Naive thymus-derived CD4-positive, alpha-beta T cell (primary cell): ENCODE measurements at regions of chr10 and their contacts with region 1.

Region 1: GRCh38 chr10:33125522-33126517 is 167.8 kb upstream of the ITGB1 start:
- DNase-seq: peak in 5 of 9 donors; percentile 25 to 63 (median 48)
- ATAC-seq: peak; percentile 87
- H3K4me3 ChIP-seq: no peak overlapping the region
- H3K4me3 Mint-ChIP-seq: peak overlapping the region; percentile 53 to 78 (median 62)
- H3K27ac ChIP-seq: peak overlapping the region; percentile 60
- H3K27ac Mint-ChIP-seq: peak overlapping the region; percentile 90 to 96 (median 92)
- H3K4me1 ChIP-seq: peaks cover 24 to 82% of the 10 kb centered on the region in 2 donors
- H3K4me1 Mint-ChIP-seq: peaks cover 34 to 77% (median 69%) of the 10 kb centered on the region in 7 donors
- H3K27me3 ChIP-seq: no peaks in the 10 kb centered on the region
- H3K27me3 Mint-ChIP-seq: no peaks in the 10 kb centered on the region

Region 2: GRCh38 chr10:33109788-33110469 is 15.9 kb before region 1 on chr10:
- CTCF ChIA-PET with region 1: interaction called, 8 read pairs
- POLR2A ChIA-PET with region 1: interaction called, 10 read pairs
- intact Hi-C with region 1: loop called in 1 of 2 experiments (anchors 2 kb)
- DNase-seq: no peak
- ATAC-seq: peak; percentile 68
- H3K4me3 ChIP-seq: no peak overlapping the region
- H3K4me3 Mint-ChIP-seq: peak overlapping the region in 5 of 10 donors; percentile 9 to 37 (median 26)
- H3K27ac ChIP-seq: no peak overlapping the region
- H3K27ac Mint-ChIP-seq: peak overlapping the region in 7 of 9 donors; percentile 25 to 89 (median 71)
- H3K4me1 ChIP-seq: peaks cover 0 to 72% of the 10 kb centered on the region in 2 donors
- H3K4me1 Mint-ChIP-seq: peaks cover 6 to 49% (median 24%) of the 10 kb centered on the region in 7 donors
- H3K27me3 ChIP-seq: no peaks in the 10 kb centered on the region
- H3K27me3 Mint-ChIP-seq: no peaks in the 10 kb centered on the region

Region 3: DNA sequence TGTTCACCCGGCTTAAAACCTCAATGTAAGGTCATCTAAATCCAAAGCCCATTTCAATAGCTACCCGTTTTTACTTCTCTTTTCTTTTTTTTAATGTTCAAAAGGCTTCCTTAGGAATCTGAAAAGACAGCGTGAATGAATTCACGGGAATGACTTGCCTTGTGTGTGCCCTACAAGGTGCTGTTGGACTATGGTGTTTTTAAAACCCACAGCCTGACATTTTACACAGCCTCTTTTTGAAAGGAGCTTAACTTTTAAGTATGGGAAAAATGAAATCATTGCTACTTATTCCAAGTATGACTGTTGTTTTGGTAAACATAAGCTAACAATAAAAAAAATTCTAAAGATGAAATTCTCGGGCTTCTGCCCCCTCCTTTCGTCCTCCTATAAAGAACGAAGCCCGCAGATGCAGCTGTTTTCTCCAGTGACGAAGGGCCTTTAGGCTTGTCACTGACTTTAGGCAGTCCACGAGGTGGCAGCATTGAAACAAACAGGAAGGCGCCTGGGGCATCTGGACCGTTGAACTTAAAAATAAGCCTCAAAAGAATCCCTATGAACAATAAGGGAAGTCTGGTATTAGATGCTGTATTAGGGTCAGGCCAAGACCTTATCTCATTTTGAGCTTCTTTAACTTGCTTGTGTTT is 67.4 kb after region 1 on chr10:
- CTCF ChIA-PET with region 1: no interaction called
- POLR2A ChIA-PET with region 1: no interaction called
- intact Hi-C with region 1: no loop called
- DNase-seq: peak; percentile 28 to 70 (median 62)
- ATAC-seq: peak; percentile 91
- H3K4me3 ChIP-seq: no peak overlapping the region
- H3K4me3 Mint-ChIP-seq: no peak overlapping the region
- H3K27ac ChIP-seq: no peak overlapping the region
- H3K27ac Mint-ChIP-seq: peak overlapping the region in 1 of 9 donors; percentile 37
- H3K4me1 ChIP-seq: no peaks in the 10 kb centered on the region
- H3K4me1 Mint-ChIP-seq: peaks cover 0 to 6% (median 0%) of the 10 kb centered on the region in 7 donors
- H3K27me3 ChIP-seq: no peaks in the 10 kb centered on the region
- H3K27me3 Mint-ChIP-seq: peaks cover 0 to 28% (median 5%) of the 10 kb centered on the region in 5 donors

Region 4: GRCh38 chr10:33314811-33315561 is 189.2 kb after region 1 on chr10:
- CTCF ChIA-PET with region 1: no interaction called
- POLR2A ChIA-PET with region 1: no interaction called
- intact Hi-C with region 1: no loop called
- DNase-seq: no peak
- ATAC-seq: no peak
- H3K4me3 ChIP-seq: no peak overlapping the region
- H3K4me3 Mint-ChIP-seq: no peak overlapping the region
- H3K27ac ChIP-seq: no peak overlapping the region
- H3K27ac Mint-ChIP-seq: no peak overlapping the region
- H3K4me1 ChIP-seq: no peaks in the 10 kb centered on the region
- H3K4me1 Mint-ChIP-seq: no peaks in the 10 kb centered on the region
- H3K27me3 ChIP-seq: no peaks in the 10 kb centered on the region
- H3K27me3 Mint-ChIP-seq: peaks cover 0 to 16% (median 0%) of the 10 kb centered on the region in 5 donors

Region 5: GRCh38 chr10:33476757-33477273 is 351.0 kb after region 1 on chr10:
- CTCF ChIA-PET with region 1: no interaction called
- POLR2A ChIA-PET with region 1: no interaction called
- intact Hi-C with region 1: no loop called
- DNase-seq: no peak
- ATAC-seq: no peak
- H3K4me3 ChIP-seq: no peak overlapping the region
- H3K4me3 Mint-ChIP-seq: no peak overlapping the region
- H3K27ac ChIP-seq: no peak overlapping the region
- H3K27ac Mint-ChIP-seq: no peak overlapping the region
- H3K4me1 ChIP-seq: no peaks in the 10 kb centered on the region
- H3K4me1 Mint-ChIP-seq: no peaks in the 10 kb centered on the region
- H3K27me3 ChIP-seq: no peaks in the 10 kb centered on the region
- H3K27me3 Mint-ChIP-seq: peaks cover 0 to 14% (median 7%) of the 10 kb centered on the region in 5 donors